CD8-positive, alpha-beta T cell (primary cell): ENCODE measurements at regions of chr16 and their contacts with region 1.

Region 1: DNA sequence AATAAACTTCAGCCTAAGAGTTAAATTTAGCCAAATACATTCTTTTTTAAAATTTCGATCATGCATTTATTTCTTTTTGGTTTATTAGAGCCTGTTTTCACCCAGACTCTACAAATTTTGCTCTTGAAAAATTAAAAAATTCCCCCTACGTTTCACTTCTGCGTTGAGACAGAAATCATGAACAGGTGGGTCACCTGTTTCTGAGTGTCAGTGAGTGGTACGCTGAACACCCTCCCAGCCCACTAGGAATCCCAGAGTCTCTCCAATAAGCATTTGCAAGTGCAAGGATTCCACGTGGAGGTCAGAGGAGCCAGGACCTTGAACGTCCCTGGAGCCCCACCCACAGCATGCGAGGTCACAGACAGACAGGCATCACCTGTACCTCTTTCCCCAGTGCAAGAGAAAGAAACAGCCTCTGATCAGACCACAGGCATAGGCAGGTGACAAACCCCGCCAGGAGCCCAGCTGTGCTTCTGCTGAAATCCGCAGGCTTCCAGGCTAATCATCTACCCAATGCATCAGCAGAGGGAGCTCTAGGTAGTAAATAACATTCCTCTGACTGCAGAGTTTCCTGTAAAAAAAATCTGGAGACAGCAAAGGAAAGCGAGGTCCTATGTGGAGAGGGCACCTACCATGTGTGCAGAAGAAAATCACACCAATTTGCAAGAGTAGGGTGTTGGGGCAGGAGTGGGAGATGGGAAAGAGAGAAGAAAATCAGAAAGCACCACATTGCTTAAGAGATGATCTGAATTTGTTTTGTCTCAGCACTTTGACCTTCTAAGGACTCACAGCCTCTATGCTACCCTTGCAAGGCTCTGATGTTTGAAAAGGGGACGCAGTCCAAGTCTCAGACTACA is 5.9 kb upstream of the XYLT1 start:
- DNase-seq: peak in 7 of 9 experiments; percentile 18 to 73 (median 52)
- ATAC-seq: peak; percentile 76
- H3K4me3 ChIP-seq: no peak overlapping the region
- H3K4me3 Mint-ChIP-seq: no peak overlapping the region
- H3K27ac ChIP-seq: no peak overlapping the region
- H3K27ac Mint-ChIP-seq: no peak overlapping the region
- H3K4me1 ChIP-seq: peaks cover 11% of the 10 kb centered on the region
- H3K4me1 Mint-ChIP-seq: peaks cover 27% of the 10 kb centered on the region
- H3K27me3 ChIP-seq: no peaks in the 10 kb centered on the region
- H3K27me3 Mint-ChIP-seq: peaks cover 13% of the 10 kb centered on the region
- CTCF ChIP-seq: peak; percentile 34

Region 2: DNA sequence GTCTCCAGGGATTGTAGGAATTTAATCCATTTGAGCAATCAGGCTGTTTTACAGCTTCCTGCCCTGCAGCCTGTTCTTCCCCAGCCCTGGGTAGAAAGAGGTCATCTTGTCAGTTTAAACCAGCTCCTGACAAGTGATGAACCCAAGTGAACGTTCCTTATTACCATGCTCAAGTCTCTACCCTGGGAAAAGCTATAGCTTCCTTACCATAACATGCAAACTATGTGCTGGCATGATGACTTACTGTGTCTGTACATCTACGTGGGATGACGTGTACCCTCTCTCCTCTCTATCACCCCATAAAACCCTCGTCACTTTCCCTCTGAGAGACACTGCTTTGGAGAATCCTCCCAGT is 458.1 kb before region 1 on chr16:
- CTCF ChIA-PET with region 1: no interaction called
- POLR2A ChIA-PET with region 1: no interaction called
- intact Hi-C with region 1: loop called in 1 of 2 experiments (anchors 10 kb)
- DNase-seq: no peak
- ATAC-seq: no peak
- H3K4me3 ChIP-seq: no peak overlapping the region
- H3K4me3 Mint-ChIP-seq: no peak overlapping the region
- H3K27ac ChIP-seq: no peak overlapping the region
- H3K27ac Mint-ChIP-seq: no peak overlapping the region
- H3K4me1 ChIP-seq: peaks cover 4% of the 10 kb centered on the region
- H3K4me1 Mint-ChIP-seq: peaks cover 20% of the 10 kb centered on the region
- H3K27me3 ChIP-seq: no peaks in the 10 kb centered on the region
- H3K27me3 Mint-ChIP-seq: no peaks in the 10 kb centered on the region
- CTCF ChIP-seq: no peak

Region 3: DNA sequence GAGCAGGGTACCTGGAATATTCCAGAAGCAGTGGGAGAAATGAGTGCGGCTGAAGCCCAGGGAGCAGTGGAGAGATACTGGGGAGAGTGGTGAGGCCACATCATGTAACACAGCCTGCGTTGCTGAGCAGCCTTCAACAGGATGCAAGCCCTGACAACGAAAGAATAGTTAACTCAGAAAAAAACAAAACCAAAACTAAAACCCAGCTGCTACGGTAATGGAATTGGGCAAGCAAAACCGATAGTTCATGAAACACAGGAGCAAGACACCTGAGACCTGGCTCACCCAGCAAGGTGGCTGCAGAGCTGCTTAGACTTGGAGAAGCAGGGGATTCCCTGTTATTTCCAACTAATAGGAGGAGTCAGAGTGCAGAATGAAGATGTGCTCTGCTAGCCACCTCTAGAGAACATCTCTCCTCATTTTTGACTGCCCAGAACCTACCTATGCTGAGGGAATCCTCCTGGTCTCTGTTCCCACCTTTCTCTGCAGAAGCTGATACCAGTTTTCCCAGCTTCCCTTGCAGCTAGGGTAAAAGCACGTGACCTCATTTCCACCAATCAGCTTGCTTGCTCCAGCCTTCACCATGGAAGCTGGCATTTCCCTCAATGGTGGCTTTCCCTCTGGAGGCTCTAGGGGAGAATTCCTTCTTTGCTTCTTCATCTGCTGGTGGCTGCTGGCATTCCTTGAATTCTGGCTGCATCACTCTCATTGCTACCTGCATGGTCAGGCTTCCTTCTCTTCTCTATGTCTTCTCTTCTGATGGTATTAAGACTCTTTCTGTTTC is 53.5 kb after region 1 on chr16:
- CTCF ChIA-PET with region 1: no interaction called
- POLR2A ChIA-PET with region 1: no interaction called
- intact Hi-C with region 1: loop called in 1 of 2 experiments (anchors 2 kb)
- DNase-seq: peak in 7 of 9 experiments; percentile 1 to 69 (median 31)
- ATAC-seq: peak; percentile 86
- H3K4me3 ChIP-seq: peak overlapping the region; percentile 51 to 62
- H3K4me3 Mint-ChIP-seq: peak overlapping the region; percentile 92
- H3K27ac ChIP-seq: peak overlapping the region; percentile 51 to 65
- H3K27ac Mint-ChIP-seq: peak overlapping the region; percentile 95
- H3K4me1 ChIP-seq: peaks cover 6% of the 10 kb centered on the region
- H3K4me1 Mint-ChIP-seq: peaks cover 22% of the 10 kb centered on the region
- H3K27me3 ChIP-seq: no peaks in the 10 kb centered on the region
- H3K27me3 Mint-ChIP-seq: peaks cover 2% of the 10 kb centered on the region
- CTCF ChIP-seq: no peak